Activated CD4-positive, alpha-beta T cell treated with anti-CD3 and anti-CD28 coated beads for 36 hours (primary cell): ENCODE measurements at regions of chr7 and their contacts with region 1.

Region 1: GRCh38 chr7:155205368-155206317 is 92.0 kb upstream of the INSIG1 start:
- DNase-seq: peak; percentile 95
- ATAC-seq: peak; percentile 84
- H3K4me3 Mint-ChIP-seq: peak overlapping the region; percentile 77
- H3K27ac Mint-ChIP-seq: peak overlapping the region; percentile 100
- H3K4me1 Mint-ChIP-seq: peaks cover 60% of the 10 kb centered on the region
- H3K27me3 Mint-ChIP-seq: no peaks in the 10 kb centered on the region

Region 2: GRCh38 chr7:155283565-155284194 is 78.0 kb after region 1 on chr7:
- CTCF ChIA-PET with region 1: no interaction called
- POLR2A ChIA-PET with region 1: no interaction called
- intact Hi-C with region 1: loop called in 1 of 2 experiments (anchors 5 kb)
- DNase-seq: peak; percentile 46
- ATAC-seq: peak; percentile 74
- H3K4me3 Mint-ChIP-seq: no peak overlapping the region
- H3K27ac Mint-ChIP-seq: no peak overlapping the region
- H3K4me1 Mint-ChIP-seq: peaks cover 54% of the 10 kb centered on the region
- H3K27me3 Mint-ChIP-seq: peaks cover 5% of the 10 kb centered on the region